Adrenal gland (tissue), 19 donors: ENCODE measurements at regions of chr5 and their contacts with region 1.

Region 1: GRCh38 chr5:154072414-154073171 is 33.8 kb downstream of the MFAP3 start:
- DNase-seq: peak; percentile 68 to 92 (median 84)
- H3K4me3 ChIP-seq: no peak overlapping the region
- H3K27ac ChIP-seq: no peak overlapping the region
- H3K4me1 ChIP-seq: peaks cover 6 to 8% of the 10 kb centered on the region in 2 donors
- H3K27me3 ChIP-seq: no peaks in the 10 kb centered on the region
- CTCF ChIP-seq: peak; percentile 86 to 98 (median 95)
- POLR2A ChIP-seq: no peak

Region 2: GRCh38 chr5:154630410-154630809 is 557.8 kb after region 1 on chr5:
- intact Hi-C with region 1: loop called in 1 of 2 experiments (anchors 10 kb)
- DNase-seq: peak in 1 of 7 donors; percentile 28
- H3K4me3 ChIP-seq: no peak overlapping the region
- H3K27ac ChIP-seq: no peak overlapping the region
- H3K4me1 ChIP-seq: no peaks in the 10 kb centered on the region
- H3K27me3 ChIP-seq: no peaks in the 10 kb centered on the region
- CTCF ChIP-seq: no peak
- POLR2A ChIP-seq: no peak